HepG2 (cell line): ENCODE measurements at regions of chr2 and their contacts with region 1.

Region 1: DNA sequence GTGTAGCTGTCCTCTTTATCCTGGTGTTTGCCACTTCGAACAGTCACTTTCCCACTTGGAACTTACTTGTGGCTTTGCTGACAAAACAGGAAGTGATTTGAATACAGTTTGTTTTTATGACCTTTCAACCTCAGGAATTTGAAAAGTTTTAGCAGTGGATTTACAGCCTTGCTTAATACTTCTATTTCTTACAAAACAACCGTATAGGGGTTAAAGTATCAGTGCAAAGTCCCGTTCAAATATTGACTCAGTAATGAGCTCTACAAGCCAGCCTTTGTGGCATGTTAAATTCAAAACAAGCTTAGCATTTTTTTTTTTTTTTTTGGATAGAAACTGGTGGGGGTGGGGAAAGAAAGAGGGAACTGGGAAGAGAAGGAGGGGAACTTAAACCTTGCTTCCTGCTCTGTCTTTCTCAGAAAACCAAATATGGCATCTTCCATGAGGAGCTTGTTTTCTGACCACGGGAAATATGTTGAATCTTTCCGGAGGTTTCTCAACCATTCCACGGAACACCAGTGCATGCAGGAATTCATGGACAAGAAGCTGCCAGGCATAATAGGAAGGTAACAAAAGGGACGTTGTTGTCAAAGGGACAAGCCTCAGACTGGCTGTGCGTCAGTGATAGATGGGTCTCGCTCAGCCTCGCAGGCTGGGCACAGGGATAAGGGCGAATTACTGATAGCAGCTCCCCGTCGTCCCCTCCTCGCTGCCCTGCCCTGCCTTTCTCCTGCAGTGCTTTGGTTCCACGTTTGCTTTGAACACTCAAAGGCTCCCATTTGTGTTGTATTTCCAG is at the start of gene HNMT:
- DNase-seq: peak; percentile 100
- ATAC-seq: peak; percentile 96
- H3K4me3 ChIP-seq: peak within 1 kb of the TSS; percentile 66 to 85 (median 82)
- H3K27ac ChIP-seq: peak within 1 kb of the TSS; percentile 100
- H3K4me1 ChIP-seq: peaks cover 64% of the 10 kb centered on the region
- H3K27me3 ChIP-seq: no peaks in the 10 kb centered on the region; a peak in 2 of 5 replicates
- CTCF ChIP-seq: no peak
- EP300 ChIP-seq: peak; percentile 99 to 100
- POLR2A ChIP-seq: peak; percentile 98 to 99
- RAD21 ChIP-seq: peak; percentile 67
- total RNA-seq, gene HNMT: 309 and 372 TPM in 2 replicates

Region 2: DNA sequence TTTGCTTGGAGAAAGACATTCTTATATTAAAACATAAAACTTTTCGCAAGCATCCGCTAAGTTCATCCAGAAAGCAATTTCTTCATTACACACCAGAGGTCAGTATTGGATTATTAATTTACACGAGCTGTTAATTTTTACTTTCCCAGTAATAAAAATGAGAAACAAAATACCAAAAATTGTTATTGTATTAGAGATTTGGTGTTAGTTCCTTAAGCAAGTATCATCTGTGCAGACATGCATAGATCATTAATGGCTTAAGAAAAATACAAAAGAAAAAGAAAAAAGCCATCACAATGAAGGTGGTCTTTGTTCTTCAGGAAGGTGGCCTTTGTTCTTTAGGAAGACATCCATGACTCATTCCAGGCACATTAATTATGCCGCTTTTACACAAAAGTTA is 53.6 kb before region 1 on chr2:
- CTCF ChIA-PET with region 1: no interaction called
- POLR2A ChIA-PET with region 1: interaction called, 31 read pairs
- in situ Hi-C with region 1: no loop called
- intact Hi-C with region 1: loop called (anchors 1 kb)
- DNase-seq: peak; percentile 55
- ATAC-seq: no peak
- H3K4me3 ChIP-seq: no peak overlapping the region
- H3K27ac ChIP-seq: no peak overlapping the region
- H3K4me1 ChIP-seq: peaks cover 42% of the 10 kb centered on the region
- H3K27me3 ChIP-seq: no peaks in the 10 kb centered on the region
- CTCF ChIP-seq: peak; percentile 66
- EP300 ChIP-seq: peak in 1 of 2 experiments; percentile 30; a peak in 1 of 4 replicates
- POLR2A ChIP-seq: no peak
- RAD21 ChIP-seq: peak; percentile 84

Region 3: GRCh38 chr2:137975280-137976265 is 11.3 kb after region 1 on chr2:
- CTCF ChIA-PET with region 1: no interaction called
- POLR2A ChIA-PET with region 1: interaction called, 145 read pairs
- in situ Hi-C with region 1: no loop called
- intact Hi-C with region 1: no loop called
- DNase-seq: peak; percentile 73
- ATAC-seq: peak; percentile 89
- H3K4me3 ChIP-seq: peak overlapping the region in 1 of 3 experiments; percentile 1; a peak in 2 of 6 replicates
- H3K27ac ChIP-seq: peak overlapping the region; percentile 71
- H3K4me1 ChIP-seq: peaks cover 76% of the 10 kb centered on the region
- H3K27me3 ChIP-seq: no peaks in the 10 kb centered on the region
- CTCF ChIP-seq: no peak
- EP300 ChIP-seq: no peak
- POLR2A ChIP-seq: 0 out of 4 replicates have a peak, but pooled peaks of 1 of the 2 experiments have one; percentile 1
- RAD21 ChIP-seq: 0 out of 2 replicates have a peak, but pooled peaks have one; percentile 12

Region 4: GRCh38 chr2:138016351-138017087 is 52.3 kb after region 1 on chr2:
- CTCF ChIA-PET with region 1: no interaction called
- POLR2A ChIA-PET with region 1: interaction called, 10 read pairs
- in situ Hi-C with region 1: no loop called
- intact Hi-C with region 1: no loop called
- DNase-seq: no peak
- ATAC-seq: no peak
- H3K4me3 ChIP-seq: no peak overlapping the region
- H3K27ac ChIP-seq: no peak overlapping the region
- H3K4me1 ChIP-seq: no peaks in the 10 kb centered on the region
- H3K27me3 ChIP-seq: no peaks in the 10 kb centered on the region
- CTCF ChIP-seq: no peak
- EP300 ChIP-seq: no peak
- POLR2A ChIP-seq: no peak
- RAD21 ChIP-seq: no peak

Region 5: GRCh38 chr2:138110453-138111083 is 146.3 kb after region 1 on chr2:
- CTCF ChIA-PET with region 1: no interaction called
- POLR2A ChIA-PET with region 1: interaction called, 40 read pairs
- in situ Hi-C with region 1: no loop called
- intact Hi-C with region 1: no loop called
- DNase-seq: peak; percentile 96
- ATAC-seq: peak; percentile 91
- H3K4me3 ChIP-seq: peak overlapping the region in 1 of 3 experiments; percentile 6; a peak in 1 of 6 replicates
- H3K27ac ChIP-seq: peak overlapping the region; percentile 72
- H3K4me1 ChIP-seq: peaks cover 62% of the 10 kb centered on the region
- H3K27me3 ChIP-seq: no peaks in the 10 kb centered on the region
- CTCF ChIP-seq: no peak
- EP300 ChIP-seq: peak; percentile 93 to 99
- POLR2A ChIP-seq: no peak
- RAD21 ChIP-seq: no peak

Region 6: GRCh38 chr2:138501425-138502283 is 537.4 kb after region 1 on chr2 and contains the start of gene SPOPL:
- CTCF ChIA-PET with region 1: no interaction called
- POLR2A ChIA-PET with region 1: interaction called, 15 read pairs
- in situ Hi-C with region 1: no loop called
- intact Hi-C with region 1: no loop called
- DNase-seq: peak; percentile 87
- ATAC-seq: peak; percentile 92
- H3K4me3 ChIP-seq: peak within 1 kb of the TSS; percentile 78 to 94 (median 93)
- H3K27ac ChIP-seq: peak within 1 kb of the TSS; percentile 96
- H3K4me1 ChIP-seq: peaks cover 56% of the 10 kb centered on the region
- H3K27me3 ChIP-seq: no peaks in the 10 kb centered on the region; a peak in 1 of 5 replicates
- CTCF ChIP-seq: peak; percentile 38; the same call in 1 of the 2 replicates
- EP300 ChIP-seq: 0 out of 4 replicates have a peak, but pooled peaks of 1 of the 2 experiments have one; percentile 29
- POLR2A ChIP-seq: peak; percentile 85 to 93
- RAD21 ChIP-seq: peak; percentile 81
- total RNA-seq, gene SPOPL: 51.6 and 68.8 TPM in 2 replicates